ENCODE measurements at regions of chr20 and their contacts with region 1.

Region 1: GRCh38 chr20:8043687-8044282 is 24.2 kb upstream of the TMX4 start:
- DNase-seq: no peak
- ATAC-seq: peak; percentile 73

Region 2: DNA sequence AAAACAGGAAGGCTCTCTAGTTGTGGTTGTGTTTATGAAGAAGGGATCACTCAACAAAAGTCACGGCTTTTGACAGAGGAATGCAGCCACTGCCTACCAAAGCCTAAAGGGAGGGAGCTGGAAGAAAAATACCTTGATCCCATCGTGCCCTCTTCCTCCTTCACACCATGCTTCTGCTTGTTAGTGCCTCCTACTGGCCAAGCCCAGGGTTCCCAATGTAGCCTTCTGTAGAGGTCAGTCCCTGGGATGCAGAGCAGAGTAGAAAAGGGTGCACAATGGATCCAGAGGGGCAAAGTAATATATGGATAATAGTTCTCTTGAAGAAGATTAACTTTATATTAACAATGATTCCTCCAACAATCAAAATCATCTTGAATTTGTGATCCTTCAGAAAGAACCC is 1627.4 kb before region 1 on chr20:
- intact Hi-C with region 1: no loop called
- DNase-seq: no peak
- ATAC-seq: no peak

Region 3: DNA sequence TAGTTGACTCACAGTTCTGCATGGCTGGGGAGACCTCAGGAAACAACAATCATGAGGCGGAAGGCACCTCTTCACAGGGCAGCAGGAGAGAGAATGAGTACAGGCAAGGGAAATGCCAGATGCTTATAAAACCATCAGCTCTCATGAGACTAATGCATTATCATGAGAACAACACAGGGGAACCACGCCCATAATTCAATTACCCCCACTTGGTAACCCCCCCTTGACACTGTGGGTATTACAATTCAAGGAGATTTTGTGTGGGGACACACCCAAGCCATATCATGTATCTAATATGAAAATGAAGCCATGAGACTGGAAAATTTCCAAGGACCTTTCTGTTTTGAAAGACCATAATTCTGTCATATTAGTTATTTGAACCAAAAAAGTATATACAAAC is 682.7 kb after region 1 on chr20:
- intact Hi-C with region 1: loop called (anchors 5 kb)
- DNase-seq: no peak
- ATAC-seq: no peak